Activated B cell treated with CpG ODN at 0.5 μM for 24 hours (primary cell): ENCODE measurements at regions of chr1 and their contacts with region 1.

Region 1: GRCh38 chr1:172745014-172745413 is 86.1 kb downstream of the FASLG start:
- DNase-seq: no peak
- ATAC-seq: peak; percentile 86
- H3K4me3 Mint-ChIP-seq: no peak overlapping the region
- H3K27ac Mint-ChIP-seq: peak overlapping the region; percentile 43
- H3K4me1 Mint-ChIP-seq: peaks cover 34% of the 10 kb centered on the region
- H3K27me3 Mint-ChIP-seq: peaks cover 4% of the 10 kb centered on the region
- CTCF ChIP-seq: peak; percentile 42

Region 2: GRCh38 chr1:172778456-172779455 is 33.7 kb after region 1 on chr1:
- CTCF ChIA-PET with region 1: interaction called, 12 read pairs
- POLR2A ChIA-PET with region 1: interaction called, 4 read pairs
- intact Hi-C with region 1: loop called (anchors 1 kb)
- DNase-seq: no peak
- ATAC-seq: peak; percentile 82
- H3K4me3 Mint-ChIP-seq: no peak overlapping the region
- H3K27ac Mint-ChIP-seq: no peak overlapping the region
- H3K4me1 Mint-ChIP-seq: peaks cover 29% of the 10 kb centered on the region
- H3K27me3 Mint-ChIP-seq: no peaks in the 10 kb centered on the region
- CTCF ChIP-seq: no peak

Region 3: GRCh38 chr1:173112129-173112528 is 367.1 kb after region 1 on chr1:
- CTCF ChIA-PET with region 1: interaction called, 3 read pairs
- POLR2A ChIA-PET with region 1: no interaction called
- intact Hi-C with region 1: loop called (anchors 10 kb)
- DNase-seq: no peak
- ATAC-seq: peak; percentile 90
- H3K4me3 Mint-ChIP-seq: peak overlapping the region; percentile 8
- H3K27ac Mint-ChIP-seq: peak overlapping the region; percentile 46
- H3K4me1 Mint-ChIP-seq: peaks cover 39% of the 10 kb centered on the region
- H3K27me3 Mint-ChIP-seq: no peaks in the 10 kb centered on the region
- CTCF ChIP-seq: no peak

Region 4: DNA sequence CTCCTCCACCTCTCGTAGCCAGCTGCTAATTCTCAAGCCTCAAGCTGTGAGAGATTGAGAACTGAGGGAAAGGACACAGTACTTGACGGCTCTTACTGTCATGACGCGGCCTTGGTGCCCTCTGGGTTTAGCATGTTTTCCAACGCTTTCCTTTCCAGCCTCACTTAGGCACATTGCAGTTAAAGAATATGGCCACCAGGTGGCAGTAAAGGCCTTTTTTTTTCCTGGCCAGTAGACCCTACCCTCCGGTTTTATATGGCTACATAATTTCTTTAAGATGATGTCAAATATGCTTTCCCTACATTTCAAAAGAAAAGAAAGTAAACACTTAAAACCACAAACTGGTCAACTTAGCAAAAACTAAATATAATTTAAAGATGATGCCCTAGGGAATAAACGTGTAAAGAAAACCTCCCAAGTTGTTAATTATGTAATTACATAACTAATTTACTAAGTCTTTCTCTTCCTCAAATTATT is 675.4 kb after region 1 on chr1:
- CTCF ChIA-PET with region 1: interaction called, 46 read pairs
- POLR2A ChIA-PET with region 1: interaction called, 16 read pairs
- intact Hi-C with region 1: loop called (anchors 1 kb)
- DNase-seq: no peak
- ATAC-seq: peak; percentile 21
- H3K4me3 Mint-ChIP-seq: peak overlapping the region; percentile 60
- H3K27ac Mint-ChIP-seq: peak overlapping the region; percentile 95
- H3K4me1 Mint-ChIP-seq: peaks cover 63% of the 10 kb centered on the region
- H3K27me3 Mint-ChIP-seq: no peaks in the 10 kb centered on the region
- CTCF ChIP-seq: no peak

Region 5: GRCh38 chr1:173824331-173825081 is 1079.5 kb after region 1 on chr1 and contains the starts of genes CENPL and DARS2:
- CTCF ChIA-PET with region 1: interaction called, 18 read pairs
- POLR2A ChIA-PET with region 1: interaction called, 10 read pairs
- intact Hi-C with region 1: loop called (anchors 1 kb)
- DNase-seq: peak; percentile 80
- ATAC-seq: peak; percentile 89
- H3K4me3 Mint-ChIP-seq: peak within 1 kb of the TSS; percentile 95
- H3K27ac Mint-ChIP-seq: peak within 1 kb of the TSS; percentile 97
- H3K4me1 Mint-ChIP-seq: peaks cover 28% of the 10 kb centered on the region
- H3K27me3 Mint-ChIP-seq: no peaks in the 10 kb centered on the region
- CTCF ChIP-seq: no peak
- total RNA-seq, gene CENPL: 12.7 and 14.0 TPM in 2 replicates
- total RNA-seq, gene DARS2: 24.0 and 26.0 TPM in 2 replicates

Region 6: GRCh38 chr1:174159252-174160108 is 1414.5 kb after region 1 on chr1 and contains the start of gene RABGAP1L:
- CTCF ChIA-PET with region 1: no interaction called
- POLR2A ChIA-PET with region 1: no interaction called
- intact Hi-C with region 1: loop called (anchors 1 kb)
- DNase-seq: peak; percentile 88
- ATAC-seq: peak; percentile 84
- H3K4me3 Mint-ChIP-seq: peak within 1 kb of the TSS; percentile 96
- H3K27ac Mint-ChIP-seq: peak within 1 kb of the TSS; percentile 99
- H3K4me1 Mint-ChIP-seq: peaks cover 72% of the 10 kb centered on the region
- H3K27me3 Mint-ChIP-seq: no peaks in the 10 kb centered on the region
- CTCF ChIP-seq: no peak
- total RNA-seq, gene RABGAP1L: 103 and 126 TPM in 2 replicates